ENCODE measurements at regions of chr19 and their contacts with region 1.

Region 1: GRCh38 chr19:17794731-17795536 is at the start of gene B3GNT3:
- DNase-seq: peak in 8 of 35 experiments; percentile 10 to 41 (median 23)
- ATAC-seq: peak in 3 of 4 experiments; percentile 13 to 36 (median 33)
- H3K4me3 ChIP-seq: peak within 1 kb of the TSS; percentile 38 to 62
- H3K4me3 Mint-ChIP-seq: peak within 1 kb of the TSS; percentile 55 to 77 (median 59)
- H3K27ac ChIP-seq: no peak within 1 kb of the TSS
- H3K27ac Mint-ChIP-seq: peak within 1 kb of the TSS; percentile 67 to 71
- H3K4me1 ChIP-seq: peaks cover 29 to 62% of the 10 kb centered on the region in 2 experiments
- H3K4me1 Mint-ChIP-seq: peaks cover 56 to 70% (median 61%) of the 10 kb centered on the region in 3 donors
- H3K27me3 ChIP-seq: peaks cover 0 to 26% of the 10 kb centered on the region in 2 experiments
- H3K27me3 Mint-ChIP-seq: no peaks in the 10 kb centered on the region
- total RNA-seq, gene B3GNT3: 0.12 to 1.2 (median 0.79) TPM

Region 2: GRCh38 chr19:17683078-17683477 is 111.9 kb before region 1 on chr19:
- CTCF ChIA-PET with region 1: no interaction called
- POLR2A ChIA-PET with region 1: interaction called in 1 of 2 experiments, 15 read pairs
- DNase-seq: no peak
- ATAC-seq: no peak
- H3K4me3 ChIP-seq: no peak overlapping the region
- H3K4me3 Mint-ChIP-seq: no peak overlapping the region
- H3K27ac ChIP-seq: no peak overlapping the region
- H3K27ac Mint-ChIP-seq: no peak overlapping the region
- H3K4me1 ChIP-seq: peaks cover 0 to 35% of the 10 kb centered on the region in 2 experiments
- H3K4me1 Mint-ChIP-seq: peaks cover 6 to 25% (median 13%) of the 10 kb centered on the region in 3 donors
- H3K27me3 ChIP-seq: peaks cover 10 to 93% of the 10 kb centered on the region in 2 experiments
- H3K27me3 Mint-ChIP-seq: peaks cover 69 to 86% of the 10 kb centered on the region in 2 donors

Measured in T-cell (primary cell).